ENCODE measurements at regions of chr1 and their contacts with region 1.

Region 1: GRCh38 chr1:91511386-91511785 is 10.7 kb downstream of the CDC7 start:
- DNase-seq: peak in 4 of 5 donors; percentile 41 to 46 (median 44)
- H3K4me3 ChIP-seq: no peak overlapping the region
- H3K4me3 Mint-ChIP-seq: no peak overlapping the region
- H3K27ac ChIP-seq: no peak overlapping the region
- H3K27ac Mint-ChIP-seq: peak overlapping the region in 1 of 7 donors; percentile 1
- H3K4me1 ChIP-seq: no peaks in the 10 kb centered on the region
- H3K4me1 Mint-ChIP-seq: peaks cover under 1 to 9% (median 6%) of the 10 kb centered on the region in 4 donors
- H3K27me3 ChIP-seq: no peaks in the 10 kb centered on the region
- H3K27me3 Mint-ChIP-seq: no peaks in the 10 kb centered on the region

Region 2: GRCh38 chr1:91349524-91349923 is 161.9 kb before region 1 on chr1:
- CTCF ChIA-PET with region 1: no interaction called
- POLR2A ChIA-PET with region 1: no interaction called
- intact Hi-C with region 1: no loop called
- DNase-seq: no peak
- H3K4me3 ChIP-seq: no peak overlapping the region
- H3K4me3 Mint-ChIP-seq: no peak overlapping the region
- H3K27ac ChIP-seq: no peak overlapping the region
- H3K27ac Mint-ChIP-seq: no peak overlapping the region
- H3K4me1 ChIP-seq: no peaks in the 10 kb centered on the region
- H3K4me1 Mint-ChIP-seq: no peaks in the 10 kb centered on the region
- H3K27me3 ChIP-seq: no peaks in the 10 kb centered on the region
- H3K27me3 Mint-ChIP-seq: peaks cover 6% of the 10 kb centered on the region in 2 donors

Region 3: GRCh38 chr1:91500756-91501522 is 10.4 kb before region 1 on chr1 and contains the start of gene CDC7:
- CTCF ChIA-PET with region 1: interaction called, 11 read pairs
- POLR2A ChIA-PET with region 1: no interaction called
- intact Hi-C with region 1: no loop called
- DNase-seq: peak; percentile 69 to 87 (median 81)
- H3K4me3 ChIP-seq: peak within 1 kb of the TSS; percentile 62 to 81
- H3K4me3 Mint-ChIP-seq: no peak within 1 kb of the TSS
- H3K27ac ChIP-seq: peak within 1 kb of the TSS; percentile 75
- H3K27ac Mint-ChIP-seq: no peak within 1 kb of the TSS
- H3K4me1 ChIP-seq: peaks cover 31% of the 10 kb centered on the region
- H3K4me1 Mint-ChIP-seq: peaks cover 18 to 25% (median 21%) of the 10 kb centered on the region in 4 donors
- H3K27me3 ChIP-seq: no peaks in the 10 kb centered on the region
- H3K27me3 Mint-ChIP-seq: no peaks in the 10 kb centered on the region
- total RNA-seq, gene CDC7: 4.7 to 6.0 TPM

Region 4: GRCh38 chr1:91529856-91530255 is 18.5 kb after region 1 on chr1:
- CTCF ChIA-PET with region 1: interaction called, 38 read pairs
- POLR2A ChIA-PET with region 1: no interaction called
- intact Hi-C with region 1: no loop called
- DNase-seq: peak in 1 of 5 donors; percentile 14
- H3K4me3 ChIP-seq: no peak overlapping the region
- H3K4me3 Mint-ChIP-seq: peak overlapping the region in 1 of 8 donors; percentile 6
- H3K27ac ChIP-seq: no peak overlapping the region
- H3K27ac Mint-ChIP-seq: peak overlapping the region in 4 of 7 donors; percentile 8 to 92 (median 64)
- H3K4me1 ChIP-seq: peaks cover 24% of the 10 kb centered on the region
- H3K4me1 Mint-ChIP-seq: peaks cover 22 to 34% (median 25%) of the 10 kb centered on the region in 4 donors
- H3K27me3 ChIP-seq: no peaks in the 10 kb centered on the region
- H3K27me3 Mint-ChIP-seq: no peaks in the 10 kb centered on the region

Region 5: DNA sequence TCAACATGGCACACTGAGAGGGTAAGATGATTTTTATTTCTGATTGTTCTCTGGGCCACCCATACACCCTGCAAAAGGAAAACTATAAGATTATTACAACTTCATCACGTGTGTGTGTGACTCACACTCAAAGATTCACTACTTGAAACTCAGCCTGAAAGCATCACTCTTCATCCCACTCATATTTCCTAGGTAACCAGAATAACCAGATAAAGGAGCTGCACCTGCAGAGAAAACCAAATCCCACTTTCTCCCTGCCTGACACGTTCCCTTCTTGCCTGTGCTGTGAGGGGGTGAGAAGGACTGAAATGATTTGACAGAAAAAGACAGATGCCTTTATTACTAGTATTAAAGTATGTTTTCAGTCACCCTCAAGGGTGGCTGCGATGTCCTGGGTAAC is 243.0 kb after region 1 on chr1:
- CTCF ChIA-PET with region 1: no interaction called
- POLR2A ChIA-PET with region 1: no interaction called
- intact Hi-C with region 1: no loop called
- DNase-seq: no peak
- H3K4me3 ChIP-seq: no peak overlapping the region
- H3K4me3 Mint-ChIP-seq: peak overlapping the region in 2 of 8 donors; percentile 3 to 5
- H3K27ac ChIP-seq: no peak overlapping the region
- H3K27ac Mint-ChIP-seq: peak overlapping the region in 6 of 7 donors; percentile 6 to 69 (median 42)
- H3K4me1 ChIP-seq: peaks cover 18% of the 10 kb centered on the region
- H3K4me1 Mint-ChIP-seq: peaks cover 25 to 39% (median 27%) of the 10 kb centered on the region in 4 donors
- H3K27me3 ChIP-seq: no peaks in the 10 kb centered on the region
- H3K27me3 Mint-ChIP-seq: no peaks in the 10 kb centered on the region

Region 6: DNA sequence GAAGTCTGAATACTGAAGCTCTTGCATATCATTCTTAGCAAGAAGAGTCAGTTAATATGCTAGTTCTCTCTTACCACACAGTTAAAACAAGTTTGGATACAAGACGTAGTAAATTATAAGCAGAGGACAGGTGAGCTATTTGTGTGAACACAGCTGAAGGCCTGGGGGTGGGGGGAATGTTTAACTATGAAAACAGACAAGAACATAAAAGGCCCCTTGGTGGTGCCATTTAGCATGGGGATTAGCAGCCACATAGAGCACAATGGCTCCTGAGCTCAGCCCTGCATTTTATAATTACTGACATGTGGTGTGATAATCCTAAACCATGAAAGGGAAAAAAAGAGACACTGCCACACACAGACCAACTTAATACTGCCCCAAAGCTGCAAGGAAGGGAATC is 279.7 kb after region 1 on chr1:
- CTCF ChIA-PET with region 1: interaction called, 13 read pairs
- POLR2A ChIA-PET with region 1: no interaction called
- intact Hi-C with region 1: no loop called
- DNase-seq: no peak
- H3K4me3 ChIP-seq: no peak overlapping the region
- H3K4me3 Mint-ChIP-seq: peak overlapping the region in 2 of 8 donors; percentile 47 to 56
- H3K27ac ChIP-seq: no peak overlapping the region
- H3K27ac Mint-ChIP-seq: peak overlapping the region in 3 of 7 donors; percentile 33 to 79 (median 50)
- H3K4me1 ChIP-seq: peaks cover 30% of the 10 kb centered on the region
- H3K4me1 Mint-ChIP-seq: peaks cover 32 to 50% (median 37%) of the 10 kb centered on the region in 4 donors
- H3K27me3 ChIP-seq: no peaks in the 10 kb centered on the region
- H3K27me3 Mint-ChIP-seq: no peaks in the 10 kb centered on the region

Region 7: GRCh38 chr1:91879733-91880132 is 368.3 kb after region 1 on chr1:
- CTCF ChIA-PET with region 1: interaction called, 73 read pairs
- POLR2A ChIA-PET with region 1: interaction called, 6 read pairs
- intact Hi-C with region 1: loop called (anchors 1 kb)
- DNase-seq: no peak
- H3K4me3 ChIP-seq: no peak overlapping the region
- H3K4me3 Mint-ChIP-seq: no peak overlapping the region
- H3K27ac ChIP-seq: no peak overlapping the region
- H3K27ac Mint-ChIP-seq: no peak overlapping the region
- H3K4me1 ChIP-seq: peaks cover 58% of the 10 kb centered on the region
- H3K4me1 Mint-ChIP-seq: peaks cover 52 to 81% (median 64%) of the 10 kb centered on the region in 4 donors
- H3K27me3 ChIP-seq: no peaks in the 10 kb centered on the region
- H3K27me3 Mint-ChIP-seq: no peaks in the 10 kb centered on the region

Region 8: DNA sequence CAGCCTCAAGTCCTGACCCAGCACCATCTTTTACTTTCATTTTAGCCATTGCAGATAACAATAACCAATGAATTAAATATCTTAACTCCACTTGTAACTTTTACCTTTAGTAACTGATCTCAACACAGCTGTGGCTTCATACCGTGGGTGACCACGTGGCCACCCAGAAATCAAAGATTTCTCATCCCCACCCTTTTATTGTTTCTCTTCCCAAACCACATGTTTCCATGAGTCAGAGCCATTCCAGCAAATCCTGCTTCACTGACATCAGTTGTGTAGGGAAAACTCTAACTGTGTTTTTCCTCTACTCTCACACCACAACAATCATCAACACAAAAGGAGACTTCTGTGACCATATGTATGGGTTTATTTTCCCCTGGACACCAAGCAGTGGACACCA is 412.8 kb after region 1 on chr1:
- CTCF ChIA-PET with region 1: interaction called, 190 read pairs
- POLR2A ChIA-PET with region 1: no interaction called
- intact Hi-C with region 1: loop called (anchors 1 kb)
- DNase-seq: no peak
- H3K4me3 ChIP-seq: no peak overlapping the region
- H3K4me3 Mint-ChIP-seq: no peak overlapping the region
- H3K27ac ChIP-seq: no peak overlapping the region
- H3K27ac Mint-ChIP-seq: peak overlapping the region in 1 of 7 donors; percentile 42
- H3K4me1 ChIP-seq: no peaks in the 10 kb centered on the region
- H3K4me1 Mint-ChIP-seq: peaks cover 0 to 7% (median 5%) of the 10 kb centered on the region in 4 donors
- H3K27me3 ChIP-seq: no peaks in the 10 kb centered on the region
- H3K27me3 Mint-ChIP-seq: peaks cover 0 to 2% of the 10 kb centered on the region in 2 donors

Region 9: DNA sequence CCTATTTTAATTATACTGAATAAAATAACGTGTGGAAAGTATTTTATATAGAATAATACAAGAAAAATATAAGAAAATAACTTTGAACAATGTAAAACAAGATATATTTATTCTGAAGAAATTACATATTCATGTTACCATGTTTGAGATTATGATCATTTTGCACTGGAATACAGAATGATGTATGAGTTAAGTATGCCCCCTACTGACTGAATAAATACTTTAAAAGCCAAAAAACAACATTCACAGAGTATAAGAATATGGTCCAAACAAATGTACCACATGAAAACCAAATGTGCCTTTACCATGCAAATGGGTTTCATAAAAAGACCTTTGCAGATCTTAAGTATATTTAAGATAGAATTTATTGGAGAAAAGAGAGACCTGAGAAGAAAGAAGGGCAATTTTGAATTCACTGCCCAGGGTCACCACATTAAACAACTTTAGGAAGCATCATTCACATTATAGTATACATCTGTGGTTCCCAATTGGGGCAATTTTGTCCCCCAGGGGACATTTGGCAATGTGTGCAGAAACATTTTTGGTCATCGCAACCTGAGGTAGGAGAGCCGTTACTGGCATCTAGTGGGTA is 1111.9 kb after region 1 on chr1:
- CTCF ChIA-PET with region 1: no interaction called
- POLR2A ChIA-PET with region 1: no interaction called
- intact Hi-C with region 1: loop called (anchors 5 kb)
- DNase-seq: peak in 4 of 5 donors; percentile 29 to 42 (median 36)
- H3K4me3 ChIP-seq: no peak overlapping the region
- H3K4me3 Mint-ChIP-seq: no peak overlapping the region
- H3K27ac ChIP-seq: no peak overlapping the region
- H3K27ac Mint-ChIP-seq: no peak overlapping the region
- H3K4me1 ChIP-seq: no peaks in the 10 kb centered on the region
- H3K4me1 Mint-ChIP-seq: no peaks in the 10 kb centered on the region
- H3K27me3 ChIP-seq: no peaks in the 10 kb centered on the region
- H3K27me3 Mint-ChIP-seq: no peaks in the 10 kb centered on the region